IMR-90 (cell line): ENCODE measurements at regions of chr11 and their contacts with region 1.

Region 1: GRCh38 chr11:29173660-29174062 is 843.2 kb downstream of the KCNA4 start:
- DNase-seq: peak; percentile 99
- ATAC-seq: peak; percentile 86
- H3K4me3 ChIP-seq: no peak overlapping the region
- H3K27ac ChIP-seq: peak overlapping the region; percentile 99; the same call in 1 of the 2 replicates
- H3K4me1 ChIP-seq: peaks cover 6% of the 10 kb centered on the region
- H3K27me3 ChIP-seq: no peaks in the 10 kb centered on the region
- CTCF ChIP-seq: no peak
- POLR2A ChIP-seq: no peak
- RAD21 ChIP-seq: peak; percentile 19; the same call in 1 of the 2 replicates

Region 2: GRCh38 chr11:28058333-28058732 is 1115.3 kb before region 1 on chr11:
- CTCF ChIA-PET with region 1: no interaction called
- POLR2A ChIA-PET with region 1: no interaction called
- dilution Hi-C with region 1: no loop called
- in situ Hi-C with region 1: no loop called
- intact Hi-C with region 1: no loop called
- DNase-seq: peak; percentile 51
- ATAC-seq: peak; percentile 67
- H3K4me3 ChIP-seq: no peak overlapping the region
- H3K27ac ChIP-seq: no peak overlapping the region
- H3K4me1 ChIP-seq: peaks cover 2% of the 10 kb centered on the region; the same call in 1 of the 2 replicates
- H3K27me3 ChIP-seq: no peaks in the 10 kb centered on the region
- CTCF ChIP-seq: no peak
- POLR2A ChIP-seq: no peak
- RAD21 ChIP-seq: no peak

Region 3: GRCh38 chr11:28963189-28963588 is 210.5 kb before region 1 on chr11:
- CTCF ChIA-PET with region 1: no interaction called
- POLR2A ChIA-PET with region 1: no interaction called
- dilution Hi-C with region 1: no loop called
- in situ Hi-C with region 1: no loop called
- intact Hi-C with region 1: loop called (anchors 5 kb)
- DNase-seq: peak; percentile 83
- ATAC-seq: peak; percentile 36
- H3K4me3 ChIP-seq: no peak overlapping the region
- H3K27ac ChIP-seq: peak overlapping the region; percentile 87; the same call in 1 of the 2 replicates
- H3K4me1 ChIP-seq: peaks cover 13% of the 10 kb centered on the region
- H3K27me3 ChIP-seq: no peaks in the 10 kb centered on the region
- CTCF ChIP-seq: no peak
- POLR2A ChIP-seq: no peak
- RAD21 ChIP-seq: no peak

Region 4: GRCh38 chr11:29119707-29120695 is 53.7 kb before region 1 on chr11:
- CTCF ChIA-PET with region 1: no interaction called
- POLR2A ChIA-PET with region 1: no interaction called
- dilution Hi-C with region 1: no loop called
- in situ Hi-C with region 1: no loop called
- intact Hi-C with region 1: loop called (anchors 5 kb)
- DNase-seq: peak; percentile 99
- ATAC-seq: peak; percentile 86
- H3K4me3 ChIP-seq: peak overlapping the region; percentile 23; the same call in 1 of the 2 replicates
- H3K27ac ChIP-seq: peak overlapping the region; percentile 92
- H3K4me1 ChIP-seq: peaks cover 9% of the 10 kb centered on the region
- H3K27me3 ChIP-seq: no peaks in the 10 kb centered on the region
- CTCF ChIP-seq: no peak
- POLR2A ChIP-seq: peak; percentile 26; the same call in 1 of the 2 replicates
- RAD21 ChIP-seq: peak; percentile 8; the same call in 1 of the 2 replicates

Region 5: DNA sequence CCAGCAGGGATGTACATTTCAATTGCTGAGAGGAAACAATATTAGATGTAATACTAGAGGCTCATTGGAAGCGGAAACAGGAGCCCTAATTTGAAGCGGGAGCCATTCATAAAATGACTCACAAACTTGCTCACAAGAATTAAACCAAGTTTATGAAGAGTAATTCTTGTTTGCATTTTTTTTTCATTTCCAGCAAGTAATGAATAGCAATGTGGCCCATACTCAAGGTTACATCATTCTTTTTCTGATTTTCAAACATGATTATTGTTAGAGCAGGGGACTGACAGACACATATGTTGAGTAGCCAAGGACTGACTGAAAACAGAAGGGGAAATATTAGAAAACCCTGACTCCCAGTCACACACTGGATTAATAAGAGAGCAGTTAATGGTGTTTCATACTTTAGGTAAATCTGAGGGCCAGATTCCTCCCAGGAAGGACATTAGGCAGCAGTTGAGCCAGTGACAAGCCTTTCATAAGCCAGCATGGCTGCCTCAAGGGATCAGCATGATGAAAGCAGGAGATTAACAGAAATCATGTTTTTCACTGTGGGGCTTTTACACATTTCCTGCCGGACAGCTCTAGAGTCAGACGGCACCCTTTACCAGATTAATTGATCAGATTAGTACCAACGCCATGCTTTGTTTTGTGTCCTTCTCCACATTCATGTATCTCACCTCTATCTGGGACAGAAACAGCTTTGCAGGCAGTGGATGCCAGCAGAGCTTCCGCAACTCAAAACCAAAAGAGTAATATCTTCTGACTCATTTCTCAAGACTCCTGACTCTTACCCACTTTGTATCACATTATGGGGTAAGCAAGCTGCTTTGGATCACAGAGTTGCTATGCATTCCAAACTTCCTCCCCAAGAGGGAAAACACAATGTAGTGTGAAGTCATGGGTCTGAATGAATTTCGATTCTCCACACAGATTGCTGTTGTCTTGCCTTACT is 11.6 kb after region 1 on chr11:
- CTCF ChIA-PET with region 1: no interaction called
- POLR2A ChIA-PET with region 1: interaction called, 3 read pairs
- dilution Hi-C with region 1: no loop called
- in situ Hi-C with region 1: no loop called
- intact Hi-C with region 1: loop called (anchors 1 kb)
- DNase-seq: peak; percentile 98
- ATAC-seq: peak; percentile 83
- H3K4me3 ChIP-seq: no peak overlapping the region
- H3K27ac ChIP-seq: peak overlapping the region; percentile 100
- H3K4me1 ChIP-seq: peaks cover 11% of the 10 kb centered on the region
- H3K27me3 ChIP-seq: no peaks in the 10 kb centered on the region
- CTCF ChIP-seq: no peak
- POLR2A ChIP-seq: no peak
- RAD21 ChIP-seq: peak; percentile 26; the same call in 1 of the 2 replicates

Region 6: DNA sequence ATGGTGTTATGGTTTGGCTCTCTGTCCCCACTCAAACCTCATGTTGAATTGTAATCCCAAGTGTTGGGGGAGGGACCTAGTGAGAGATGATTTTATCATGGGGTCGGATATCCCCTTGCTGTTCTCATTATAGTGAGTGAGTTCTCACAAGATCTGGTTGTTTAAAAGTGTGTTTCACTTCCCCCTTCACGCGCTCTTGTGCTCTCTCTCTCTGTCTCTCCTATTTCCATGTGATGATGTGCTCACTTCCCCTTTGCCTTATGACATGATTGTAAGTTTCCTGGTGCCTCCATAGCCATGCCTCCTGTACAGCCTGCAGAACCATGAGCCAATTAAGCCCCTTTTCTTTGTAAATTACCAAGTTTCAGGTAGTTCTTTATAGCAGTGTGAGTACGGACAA is 78.1 kb after region 1 on chr11:
- CTCF ChIA-PET with region 1: no interaction called
- POLR2A ChIA-PET with region 1: no interaction called
- dilution Hi-C with region 1: no loop called
- in situ Hi-C with region 1: no loop called
- intact Hi-C with region 1: no loop called
- DNase-seq: no peak
- ATAC-seq: no peak
- H3K4me3 ChIP-seq: no peak overlapping the region
- H3K27ac ChIP-seq: no peak overlapping the region
- H3K4me1 ChIP-seq: no peaks in the 10 kb centered on the region
- H3K27me3 ChIP-seq: no peaks in the 10 kb centered on the region
- CTCF ChIP-seq: no peak
- POLR2A ChIP-seq: no peak
- RAD21 ChIP-seq: no peak